ENCODE measurements at regions of chr16 and their contacts with region 1.

Region 1: GRCh38 chr16:10918294-10919002 is 23.8 kb downstream of the DEXI start:
- DNase-seq: peak; percentile 86 to 95
- ATAC-seq: peak; percentile 69 to 89 (median 78)
- H3K4me3 ChIP-seq: peak overlapping the region in 5 of 10 donors; percentile 21 to 34 (median 26)
- H3K27ac ChIP-seq: peak overlapping the region in 8 of 10 donors; percentile 17 to 70 (median 62)
- H3K4me1 ChIP-seq: peaks cover 17 to 54% (median 46%) of the 10 kb centered on the region in 9 donors
- H3K27me3 ChIP-seq: no peaks in the 10 kb centered on the region
- CTCF ChIP-seq: peak; percentile 86 to 98 (median 96)

Region 2: DNA sequence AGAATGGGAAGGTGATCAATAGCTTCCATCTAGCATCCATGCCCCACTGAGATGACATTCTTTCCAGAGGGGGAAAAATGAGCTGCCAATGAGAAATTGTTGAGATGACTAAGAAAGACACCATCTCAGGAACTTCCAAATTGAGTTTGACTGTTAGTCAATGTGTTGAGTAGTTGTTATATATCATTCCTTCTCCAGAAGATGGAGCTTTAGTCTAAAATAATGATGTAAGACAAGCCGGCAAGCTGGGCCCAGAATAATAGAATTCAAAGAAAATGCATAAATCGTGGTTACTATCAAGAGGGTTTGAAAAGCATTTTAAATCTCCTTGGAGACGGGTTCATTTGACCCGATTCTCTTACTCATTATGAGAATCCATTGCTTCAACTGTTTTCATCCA is 603.6 kb before region 1 on chr16:
- intact Hi-C with region 1: loop called in 1 of 10 experiments (anchors 10 kb)
- DNase-seq: no peak
- ATAC-seq: peak in 2 of 8 donors; percentile 39 to 55
- H3K4me3 ChIP-seq: no peak overlapping the region
- H3K27ac ChIP-seq: no peak overlapping the region
- H3K4me1 ChIP-seq: no peaks in the 10 kb centered on the region
- H3K27me3 ChIP-seq: no peaks in the 10 kb centered on the region
- CTCF ChIP-seq: peak in 6 of 9 donors; percentile 32 to 59 (median 52)

Region 3: GRCh38 chr16:10521681-10522274 is 396.7 kb before region 1 on chr16:
- intact Hi-C with region 1: loop called in 7 of 10 experiments (anchors 2 to 10 kb)
- DNase-seq: peak in 1 of 2 donors; percentile 58
- ATAC-seq: peak; percentile 49 to 86 (median 78)
- H3K4me3 ChIP-seq: no peak overlapping the region
- H3K27ac ChIP-seq: no peak overlapping the region
- H3K4me1 ChIP-seq: peaks cover 0 to 6% (median 0%) of the 10 kb centered on the region in 9 donors
- H3K27me3 ChIP-seq: no peaks in the 10 kb centered on the region
- CTCF ChIP-seq: peak; percentile 74 to 92 (median 83)

Region 4: DNA sequence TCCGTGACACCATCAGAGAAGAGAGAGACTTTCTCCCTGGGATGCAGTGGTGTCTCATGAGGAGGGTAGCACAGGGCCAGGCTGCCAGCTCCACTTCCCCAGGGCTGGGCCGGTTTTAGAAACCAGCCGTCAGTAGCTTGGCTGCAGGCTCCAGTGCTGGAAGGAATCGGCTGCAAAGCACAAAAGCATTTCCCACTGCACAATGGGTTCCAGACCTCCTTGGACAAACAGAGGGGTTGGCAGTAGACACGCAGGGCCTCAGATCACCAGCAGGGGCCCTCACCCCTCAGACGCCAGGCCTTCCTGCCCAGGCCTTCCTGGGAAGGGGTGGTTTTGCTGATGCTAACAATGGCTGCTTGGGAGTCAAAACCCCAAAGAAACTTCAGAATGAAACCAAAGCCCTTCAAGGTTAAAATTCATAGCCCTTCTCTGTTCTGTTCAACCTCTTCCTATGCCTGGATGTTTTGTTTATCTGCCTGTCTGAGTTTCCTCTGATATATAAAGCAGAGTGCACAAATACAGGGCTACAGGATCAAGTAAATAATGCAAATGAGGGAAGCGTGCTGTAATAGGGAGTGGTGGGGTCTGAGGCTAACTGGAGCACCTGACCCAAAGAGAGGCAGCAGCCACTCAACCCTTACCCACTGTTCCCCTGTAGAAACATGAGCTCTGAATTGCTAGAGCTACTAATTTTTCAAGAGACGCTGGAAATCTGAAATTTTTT is 250.0 kb before region 1 on chr16:
- intact Hi-C with region 1: loop called in 1 of 10 experiments (anchors 5 kb)
- DNase-seq: peak in 1 of 2 donors; percentile 17
- ATAC-seq: peak in 6 of 8 donors; percentile 33 to 67 (median 46)
- H3K4me3 ChIP-seq: no peak overlapping the region
- H3K27ac ChIP-seq: no peak overlapping the region
- H3K4me1 ChIP-seq: peaks cover 0 to 6% (median 0%) of the 10 kb centered on the region in 9 donors
- H3K27me3 ChIP-seq: no peaks in the 10 kb centered on the region
- CTCF ChIP-seq: peak; percentile 19 to 59 (median 43)

Region 5: GRCh38 chr16:10752843-10753523 is 165.5 kb before region 1 on chr16:
- intact Hi-C with region 1: loop called in 3 of 10 experiments (anchors 5 kb)
- DNase-seq: peak; percentile 49 to 67
- ATAC-seq: peak in 6 of 8 donors; percentile 16 to 53 (median 48)
- H3K4me3 ChIP-seq: no peak overlapping the region
- H3K27ac ChIP-seq: peak overlapping the region in 3 of 10 donors; percentile 1 to 78 (median 15)
- H3K4me1 ChIP-seq: peaks cover 0 to 65% (median 22%) of the 10 kb centered on the region in 9 donors
- H3K27me3 ChIP-seq: no peaks in the 10 kb centered on the region
- CTCF ChIP-seq: no peak

Region 6: DNA sequence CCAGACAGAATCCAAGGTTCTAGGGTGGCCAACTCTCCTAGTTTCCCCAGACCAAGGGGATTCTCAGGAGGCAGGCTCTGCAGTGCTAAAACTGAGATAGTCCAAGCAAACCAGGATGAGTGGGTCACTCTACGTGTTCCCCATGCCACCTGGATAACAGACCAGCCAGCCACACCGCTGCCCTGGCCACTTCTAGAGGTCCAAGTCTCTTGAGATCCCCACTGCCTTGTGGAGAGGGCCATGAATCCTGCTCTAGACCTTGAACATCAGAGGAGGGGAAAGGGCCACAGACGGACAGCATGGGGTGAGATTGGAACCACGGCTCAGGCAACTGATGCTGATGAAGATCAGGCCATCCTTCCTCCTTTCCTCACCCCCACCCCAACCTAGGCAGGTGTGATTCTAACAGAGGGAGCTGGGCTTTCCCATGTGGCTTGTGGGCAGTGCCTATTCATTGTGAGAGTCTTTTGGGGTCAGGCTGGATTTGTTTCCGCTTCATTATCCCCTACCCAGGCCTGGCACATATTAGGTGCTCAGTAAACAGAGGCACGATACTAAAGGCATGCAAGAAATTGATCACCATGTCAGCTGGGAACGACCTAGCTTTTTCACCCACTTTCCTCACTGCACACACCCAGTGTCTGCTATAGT is 83.0 kb before region 1 on chr16:
- intact Hi-C with region 1: loop called in 2 of 10 experiments (anchors 5 kb)
- DNase-seq: no peak
- ATAC-seq: no peak
- H3K4me3 ChIP-seq: no peak overlapping the region
- H3K27ac ChIP-seq: no peak overlapping the region
- H3K4me1 ChIP-seq: peaks cover 0 to 20% (median 1%) of the 10 kb centered on the region in 9 donors
- H3K27me3 ChIP-seq: peaks cover 0 to 8% (median 0%) of the 10 kb centered on the region in 7 donors
- CTCF ChIP-seq: no peak

Region 7: GRCh38 chr16:10961231-10961630 is 42.8 kb after region 1 on chr16:
- intact Hi-C with region 1: no loop called
- DNase-seq: no peak
- ATAC-seq: peak in 7 of 8 donors; percentile 31 to 89 (median 62)
- H3K4me3 ChIP-seq: no peak overlapping the region
- H3K27ac ChIP-seq: peak overlapping the region in 9 of 10 donors; percentile 27 to 69 (median 42)
- H3K4me1 ChIP-seq: peaks cover 4 to 27% (median 14%) of the 10 kb centered on the region in 9 donors
- H3K27me3 ChIP-seq: no peaks in the 10 kb centered on the region
- CTCF ChIP-seq: no peak